GM13976 (cell line): ENCODE measurements at regions of chr1 and their contacts with region 1.

Region 1: GRCh38 chr1:202710070-202711045 is at the start of gene SYT2:
- DNase-seq: peak; percentile 65
- CTCF ChIP-seq: no peak

Region 2: GRCh38 chr1:202192770-202193613 is 517.4 kb before region 1 on chr1:
- in situ Hi-C with region 1: no loop called
- DNase-seq: peak; percentile 83
- CTCF ChIP-seq: peak; percentile 89

Region 3: DNA sequence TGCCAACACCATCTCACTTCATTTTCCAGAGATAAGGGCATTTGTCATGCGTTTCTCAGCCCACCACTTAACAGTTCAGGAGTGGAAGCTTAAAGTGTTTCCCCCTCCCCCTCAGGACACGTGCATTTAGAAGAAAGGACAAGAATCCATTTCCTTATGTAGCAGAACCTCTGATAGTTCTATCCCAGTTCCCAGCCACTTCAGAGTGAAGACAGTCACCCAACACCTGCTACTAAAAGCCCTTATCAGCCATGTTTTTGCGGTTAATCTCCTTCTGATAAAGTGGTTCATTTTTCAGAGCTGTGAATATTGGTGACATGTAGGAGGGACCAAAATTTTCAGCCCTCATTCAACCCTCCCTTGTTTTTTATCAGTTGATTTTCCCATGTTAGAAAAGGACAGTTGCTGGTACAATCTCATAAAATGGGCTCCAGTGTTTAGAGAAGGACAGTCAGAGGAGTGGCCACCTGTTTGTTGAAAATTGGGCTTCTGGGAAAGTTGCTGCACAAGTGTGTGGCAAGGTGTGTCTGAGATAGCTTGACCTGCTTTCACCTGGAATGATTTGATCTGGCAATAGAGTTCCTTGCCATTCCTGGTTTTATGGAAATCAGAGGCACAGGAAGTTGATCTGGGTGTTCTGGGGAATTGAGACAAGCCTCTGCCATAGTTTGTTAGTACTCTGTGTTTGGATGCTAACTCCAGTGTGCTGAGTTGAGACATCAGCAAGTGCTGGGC is 247.8 kb before region 1 on chr1:
- in situ Hi-C with region 1: loop called (anchors 25 kb)
- DNase-seq: no peak
- CTCF ChIP-seq: no peak

Region 4: GRCh38 chr1:202656951-202657646 is 53.3 kb before region 1 on chr1:
- in situ Hi-C with region 1: no loop called
- DNase-seq: no peak
- CTCF ChIP-seq: no peak